AG04449 (cell line): ENCODE measurements at regions of chr11 and their contacts with region 1.

Region 1: DNA sequence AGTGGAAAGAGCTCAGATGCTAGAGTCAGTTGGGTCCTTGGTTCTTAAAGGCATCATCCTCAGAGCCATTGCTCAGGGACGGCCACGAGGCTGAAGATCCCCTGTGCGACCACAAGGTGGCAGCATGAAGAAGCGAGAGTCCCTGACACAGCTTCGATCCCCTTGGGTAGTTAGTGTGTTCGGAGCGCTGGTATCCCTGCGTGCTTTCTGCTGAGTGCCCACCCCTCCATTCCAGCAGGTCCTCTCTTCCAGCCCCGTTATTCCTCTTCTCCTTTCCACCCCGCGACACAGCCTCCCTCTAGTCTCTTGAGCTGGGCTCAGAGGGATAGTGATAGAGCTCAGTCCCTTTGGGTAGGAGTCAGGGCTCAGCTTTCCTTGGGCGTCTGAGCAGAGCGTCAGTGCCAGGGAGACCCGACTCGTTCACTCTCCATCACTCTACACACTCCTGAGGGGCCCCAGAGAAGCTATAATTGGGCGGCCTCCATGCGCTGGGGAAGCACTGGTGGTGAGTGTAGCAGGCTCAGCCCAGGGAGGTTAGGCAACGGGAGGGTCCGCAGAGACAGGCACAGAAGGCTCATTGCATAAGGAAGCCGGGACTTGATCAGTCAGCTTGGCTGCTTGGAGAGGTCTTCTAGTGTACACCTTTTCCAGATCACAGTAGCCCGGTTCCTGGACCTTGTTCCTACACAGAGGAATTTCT is at the start of gene OR51D1:
- DNase-seq: no peak
- H3K4me3 ChIP-seq: peak within 1 kb of the TSS; percentile 36
- CTCF ChIP-seq: peak; percentile 95

Region 2: DNA sequence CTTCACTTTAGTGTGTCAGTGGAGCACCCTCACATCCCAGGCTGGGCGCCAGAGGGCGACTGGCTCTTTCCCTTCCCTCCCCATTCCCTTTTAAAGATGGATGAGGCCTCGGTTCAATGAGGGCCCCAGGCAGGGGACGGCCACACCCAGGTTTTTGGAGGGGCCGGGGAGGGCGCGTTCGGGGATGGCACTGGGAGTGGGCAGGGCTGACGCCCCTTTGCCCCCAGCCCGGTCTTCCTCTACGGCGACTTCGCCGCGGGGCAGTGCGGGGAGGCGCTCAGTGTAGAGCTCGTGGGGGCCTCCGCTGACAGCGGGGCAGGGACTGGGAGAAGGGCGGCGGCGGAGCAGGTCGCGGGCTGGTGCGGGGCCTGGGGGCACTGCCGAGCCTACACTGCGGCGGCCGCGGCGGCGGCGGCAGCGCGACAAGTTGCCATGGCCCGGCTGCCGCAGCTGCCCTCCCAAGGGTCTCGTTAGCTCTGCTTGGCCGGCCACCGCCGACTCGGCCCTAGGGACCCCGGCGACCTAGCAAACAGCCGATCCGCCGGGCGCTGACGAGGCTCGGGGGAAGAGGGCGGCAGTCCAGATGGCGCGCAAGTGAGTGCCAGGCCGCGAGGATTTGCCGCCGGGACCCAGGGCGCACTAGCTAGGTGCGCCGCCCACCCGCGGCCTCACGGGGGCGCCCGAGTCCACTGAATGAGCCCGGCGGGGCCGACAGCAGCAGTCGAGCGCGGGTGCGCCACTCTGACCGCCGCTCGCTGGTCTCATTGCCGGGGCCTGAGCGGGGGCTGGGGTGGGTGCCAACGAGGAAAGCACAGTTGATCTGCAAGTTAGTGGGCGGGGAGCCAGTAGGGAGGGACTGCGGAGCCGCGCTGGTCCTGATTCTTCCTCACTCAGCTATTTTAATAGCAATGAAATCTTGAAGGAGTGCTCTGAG is 449.8 kb before region 1 on chr11:
- CTCF ChIA-PET with region 1: interaction called, 14 read pairs
- POLR2A ChIA-PET with region 1: no interaction called
- DNase-seq: no peak
- H3K4me3 ChIP-seq: peak overlapping the region; percentile 67
- CTCF ChIP-seq: peak; percentile 97

Region 3: DNA sequence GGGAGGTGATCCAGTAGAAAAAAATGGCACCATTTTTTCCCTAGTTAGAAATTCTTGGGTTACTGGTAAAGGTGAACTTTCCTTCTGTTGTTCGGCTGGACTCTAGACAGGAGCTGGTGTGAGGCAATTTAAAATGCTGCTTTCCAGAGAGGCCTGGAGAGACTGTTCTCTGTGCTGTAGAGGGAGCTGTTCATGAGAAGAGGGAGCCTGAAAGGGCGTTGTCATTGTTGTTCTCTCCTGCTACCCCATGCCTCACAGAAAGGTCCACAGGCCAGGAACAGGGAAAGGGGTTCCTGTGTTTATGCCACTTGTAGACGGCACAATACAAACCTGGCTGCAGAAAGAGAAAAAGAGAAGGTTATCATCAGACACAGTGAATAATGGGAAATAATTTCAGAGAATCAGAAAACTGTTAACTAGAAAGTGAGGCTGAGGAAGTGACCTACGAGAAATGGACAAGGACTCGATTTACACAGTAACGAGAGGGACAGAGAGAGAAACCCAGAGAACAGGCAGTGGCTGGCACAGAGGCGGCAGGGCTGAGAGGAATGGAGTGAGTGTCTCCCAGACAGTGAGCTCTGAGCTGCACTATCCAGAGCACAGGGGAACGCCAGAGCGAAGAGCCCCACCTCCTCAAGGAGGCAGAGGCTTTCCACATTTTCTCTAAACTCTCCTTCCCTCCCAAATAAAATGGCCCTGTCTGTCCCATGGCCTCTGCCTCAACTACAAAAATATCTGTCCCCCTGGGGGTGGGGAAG is 433.3 kb before region 1 on chr11:
- CTCF ChIA-PET with region 1: no interaction called
- POLR2A ChIA-PET with region 1: no interaction called
- DNase-seq: no peak
- H3K4me3 ChIP-seq: no peak overlapping the region
- CTCF ChIP-seq: no peak

Region 4: GRCh38 chr11:4626207-4627099 is 10.7 kb before region 1 on chr11:
- CTCF ChIA-PET with region 1: interaction called, 97 read pairs
- POLR2A ChIA-PET with region 1: no interaction called
- DNase-seq: peak; percentile 24
- H3K4me3 ChIP-seq: no peak overlapping the region
- CTCF ChIP-seq: peak; percentile 62

Region 5: DNA sequence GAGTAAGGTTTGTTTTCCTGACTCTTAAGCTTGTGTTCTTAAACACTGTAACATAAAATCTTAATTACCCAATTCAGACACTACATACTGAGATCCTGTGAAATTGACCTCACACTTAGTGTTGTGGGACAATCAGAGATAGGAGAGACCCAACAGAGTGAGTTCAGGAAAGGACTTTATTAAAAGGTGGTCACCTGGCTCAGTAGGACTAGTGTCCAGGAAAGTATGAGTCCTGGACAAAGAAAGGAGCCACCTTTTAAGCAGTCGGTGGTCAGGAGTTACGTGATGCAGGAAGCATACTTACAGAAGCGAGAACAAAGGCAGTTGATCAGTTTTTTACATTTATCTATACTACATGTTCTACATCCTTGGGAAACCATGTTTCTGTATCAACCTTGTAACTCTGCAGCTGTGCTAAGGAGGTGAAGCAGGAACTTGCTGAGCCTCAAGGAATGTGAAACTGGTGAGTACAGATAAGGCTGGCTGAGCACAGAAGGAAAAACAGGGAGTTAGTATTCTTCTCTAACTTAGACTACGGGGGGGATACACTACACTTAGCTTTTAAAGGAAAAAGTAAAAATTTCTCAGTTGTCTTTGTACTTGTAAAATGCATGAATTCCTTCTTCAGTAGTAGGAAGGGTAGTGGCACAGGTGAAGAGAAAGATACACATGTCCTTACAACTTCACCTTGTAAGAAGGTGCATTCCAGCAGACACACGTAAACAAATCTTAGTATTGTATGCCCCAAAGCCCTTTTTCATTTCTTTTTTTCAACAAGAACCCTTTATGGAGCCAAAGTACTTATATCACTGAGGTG is 21.7 kb after region 1 on chr11:
- CTCF ChIA-PET with region 1: interaction called, 12 read pairs
- POLR2A ChIA-PET with region 1: no interaction called
- DNase-seq: no peak
- H3K4me3 ChIP-seq: no peak overlapping the region
- CTCF ChIP-seq: no peak

Region 6: GRCh38 chr11:4697585-4697984 is 60.5 kb after region 1 on chr11 and contains the start of gene OR51E2:
- CTCF ChIA-PET with region 1: interaction called, 12 read pairs
- POLR2A ChIA-PET with region 1: no interaction called
- DNase-seq: peak; percentile 58
- H3K4me3 ChIP-seq: no peak within 1 kb of the TSS
- CTCF ChIP-seq: no peak

Region 7: DNA sequence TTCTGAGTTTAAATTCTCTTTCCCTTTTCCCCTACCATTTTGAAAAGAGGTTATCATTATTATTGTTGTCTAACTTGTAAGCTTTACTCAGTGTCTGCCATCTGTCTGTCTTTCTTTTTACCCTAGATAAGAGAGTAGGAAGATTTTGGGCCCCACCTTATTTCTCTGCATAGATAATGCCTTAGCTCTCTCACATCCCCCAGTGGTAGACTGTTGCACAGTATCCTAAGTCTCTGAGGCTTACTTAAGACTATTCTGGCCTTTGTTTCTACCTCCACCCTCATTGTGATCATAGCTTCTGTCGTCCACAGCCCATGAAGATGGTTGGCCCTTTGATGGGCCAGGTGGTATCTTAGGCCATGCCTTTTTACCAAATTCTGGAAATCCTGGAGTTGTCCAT is 353.9 kb after region 1 on chr11:
- CTCF ChIA-PET with region 1: interaction called, 14 read pairs
- POLR2A ChIA-PET with region 1: no interaction called
- DNase-seq: no peak
- H3K4me3 ChIP-seq: no peak overlapping the region
- CTCF ChIP-seq: peak; percentile 25

Region 8: DNA sequence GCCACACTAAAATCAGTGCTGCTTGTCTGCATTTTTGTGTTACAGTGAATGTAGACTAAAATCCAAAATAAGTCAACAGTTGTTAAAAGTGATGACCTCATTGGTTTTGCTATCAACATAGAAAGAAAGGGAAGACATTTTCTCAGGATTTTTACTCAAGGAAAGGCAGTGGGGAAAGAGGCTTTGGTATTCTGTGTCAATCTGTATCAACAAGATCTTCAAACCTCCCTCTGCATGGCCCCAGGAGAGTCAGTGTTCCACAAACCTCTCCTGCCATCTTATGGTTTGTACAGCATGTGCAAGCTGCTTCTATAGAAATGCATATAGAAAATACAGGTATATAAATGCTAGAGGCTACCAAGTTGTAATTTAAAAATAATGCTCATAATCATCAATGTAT is 732.7 kb after region 1 on chr11:
- CTCF ChIA-PET with region 1: interaction called, 12 read pairs
- POLR2A ChIA-PET with region 1: no interaction called
- DNase-seq: peak; percentile 54
- H3K4me3 ChIP-seq: no peak overlapping the region
- CTCF ChIP-seq: peak; percentile 63